Activated CD4-positive, alpha-beta T cell treated with anti-CD3 and anti-CD28 coated beads for 36 hours (primary cell): ENCODE measurements at regions of chr9 and their contacts with region 1.

Region 1: GRCh38 chr9:88106491-88106890 is 31.8 kb downstream of the SPATA31C2 start:
- DNase-seq: peak; percentile 38
- ATAC-seq: peak; percentile 47
- H3K4me3 Mint-ChIP-seq: no peak overlapping the region
- H3K27ac Mint-ChIP-seq: no peak overlapping the region
- H3K4me1 Mint-ChIP-seq: peaks cover 6% of the 10 kb centered on the region
- H3K27me3 Mint-ChIP-seq: peaks cover 29% of the 10 kb centered on the region

Region 2: GRCh38 chr9:87959916-87960581 is 146.4 kb before region 1 on chr9:
- CTCF ChIA-PET with region 1: no interaction called
- POLR2A ChIA-PET with region 1: no interaction called
- intact Hi-C with region 1: no loop called
- DNase-seq: no peak
- ATAC-seq: no peak
- H3K4me3 Mint-ChIP-seq: no peak overlapping the region
- H3K27ac Mint-ChIP-seq: no peak overlapping the region
- H3K4me1 Mint-ChIP-seq: peaks cover 10% of the 10 kb centered on the region
- H3K27me3 Mint-ChIP-seq: peaks cover 6% of the 10 kb centered on the region

Region 3: GRCh38 chr9:88072851-88073365 is 33.6 kb before region 1 on chr9:
- CTCF ChIA-PET with region 1: no interaction called
- POLR2A ChIA-PET with region 1: no interaction called
- intact Hi-C with region 1: no loop called
- DNase-seq: no peak
- ATAC-seq: no peak
- H3K4me3 Mint-ChIP-seq: no peak overlapping the region
- H3K27ac Mint-ChIP-seq: no peak overlapping the region
- H3K4me1 Mint-ChIP-seq: peaks cover 6% of the 10 kb centered on the region
- H3K27me3 Mint-ChIP-seq: peaks cover 57% of the 10 kb centered on the region

Region 4: DNA sequence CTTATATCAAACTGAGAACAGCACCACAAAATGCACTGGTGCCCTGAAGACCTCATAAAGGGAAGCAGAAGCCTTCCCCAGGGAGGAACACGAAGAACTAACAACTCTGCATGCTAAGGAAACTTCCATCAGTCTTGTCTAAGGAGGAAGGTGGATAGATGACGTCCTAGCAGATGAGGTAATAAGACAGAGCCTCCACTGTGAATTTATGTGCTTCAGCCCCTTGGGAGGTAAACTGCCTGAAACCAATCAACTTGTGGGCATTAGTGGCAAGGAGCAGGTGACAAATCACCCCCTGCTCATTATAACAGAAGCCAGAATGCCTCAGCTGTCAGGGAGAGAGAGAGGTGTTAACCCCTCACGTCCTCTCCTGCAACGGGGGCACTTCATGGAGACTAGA is 232.8 kb after region 1 on chr9:
- CTCF ChIA-PET with region 1: no interaction called
- POLR2A ChIA-PET with region 1: no interaction called
- intact Hi-C with region 1: no loop called
- DNase-seq: no peak
- ATAC-seq: no peak
- H3K4me3 Mint-ChIP-seq: no peak overlapping the region
- H3K27ac Mint-ChIP-seq: no peak overlapping the region
- H3K4me1 Mint-ChIP-seq: no peaks in the 10 kb centered on the region
- H3K27me3 Mint-ChIP-seq: no peaks in the 10 kb centered on the region

Region 5: DNA sequence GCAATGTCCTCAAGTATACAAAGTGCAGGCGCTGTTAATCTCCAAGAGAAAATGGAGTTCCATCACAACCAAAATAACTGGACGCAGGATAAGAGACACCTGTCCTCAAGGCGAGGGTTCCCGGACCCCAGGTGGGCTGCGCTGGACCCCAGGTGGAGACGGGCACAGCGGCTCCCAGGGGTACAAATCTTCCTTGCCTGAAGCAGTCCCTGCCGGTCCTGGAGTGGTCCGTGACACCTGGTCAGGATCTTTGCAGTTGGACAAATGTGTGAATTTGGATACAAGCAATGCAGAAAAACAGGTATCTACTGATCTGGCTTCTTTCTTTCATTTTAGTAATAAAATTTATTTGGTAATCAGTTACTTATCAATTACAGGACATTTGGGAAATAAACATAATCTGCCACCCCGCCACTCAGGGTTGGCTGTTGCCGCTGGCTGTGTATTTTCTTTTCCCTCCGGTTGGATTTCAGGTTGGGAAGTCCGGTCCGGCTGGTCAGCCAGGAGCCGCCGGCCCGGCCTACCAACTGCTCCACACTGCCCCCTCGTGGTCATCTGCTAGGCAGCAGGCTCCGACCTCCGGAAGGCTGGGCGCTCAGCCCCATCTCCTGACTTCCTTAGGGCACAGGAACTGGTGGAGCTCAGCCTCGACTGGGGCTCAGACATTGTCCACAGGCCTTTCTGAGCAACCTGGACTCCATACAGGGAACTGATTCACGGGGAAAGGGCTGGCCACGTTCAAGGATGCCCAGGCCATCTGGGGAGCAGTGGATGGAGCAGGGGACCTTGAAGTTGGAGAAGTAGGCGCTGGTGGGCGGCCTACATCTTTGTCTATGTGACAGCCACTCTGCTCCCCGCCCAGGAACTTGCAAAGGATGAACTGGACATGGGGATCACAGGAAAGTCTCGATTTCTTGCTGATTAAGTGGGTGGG is 471.9 kb after region 1 on chr9:
- CTCF ChIA-PET with region 1: no interaction called
- POLR2A ChIA-PET with region 1: no interaction called
- intact Hi-C with region 1: loop called (anchors 2 to 5 kb)
- DNase-seq: peak; percentile 84
- ATAC-seq: peak; percentile 73
- H3K4me3 Mint-ChIP-seq: peak overlapping the region; percentile 31
- H3K27ac Mint-ChIP-seq: no peak overlapping the region
- H3K4me1 Mint-ChIP-seq: no peaks in the 10 kb centered on the region
- H3K27me3 Mint-ChIP-seq: peaks cover 13% of the 10 kb centered on the region

Region 6: DNA sequence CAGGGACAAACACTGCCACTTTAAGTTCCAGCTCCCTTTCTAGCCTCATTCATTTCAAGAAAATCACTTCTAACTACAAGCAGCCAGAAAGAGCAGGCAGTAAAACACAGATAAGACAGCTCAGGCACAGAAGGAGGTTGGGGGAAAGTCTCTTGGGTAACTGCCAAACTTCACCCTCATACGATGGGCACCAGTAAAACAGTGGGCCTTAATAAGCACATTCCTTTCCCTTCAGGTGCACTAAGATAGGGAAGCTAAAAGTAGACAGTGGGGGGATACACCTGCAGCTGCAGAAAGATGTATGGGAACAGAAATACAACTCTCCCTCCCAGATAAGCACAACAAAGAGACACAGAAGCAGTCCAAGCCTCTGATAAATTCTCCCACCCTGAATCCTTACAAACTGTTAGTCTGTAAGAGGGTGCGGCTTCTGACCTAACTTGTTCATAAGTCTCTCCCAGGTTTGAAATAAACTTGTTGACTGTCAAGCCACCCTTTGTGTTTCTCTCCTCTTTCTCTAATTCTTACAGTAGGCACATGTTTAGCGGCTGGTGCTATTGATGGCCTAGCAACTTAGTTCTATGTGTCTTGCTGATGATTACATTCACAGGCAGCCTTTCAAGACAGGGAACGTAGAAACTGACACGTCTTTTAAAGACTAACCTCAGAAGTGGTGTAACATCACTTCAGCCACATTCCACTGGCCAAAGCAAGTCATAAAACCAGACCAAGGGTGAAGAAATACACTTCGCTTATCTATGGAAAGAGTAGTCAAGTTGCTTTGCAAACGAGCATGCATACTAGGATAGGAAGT is 1197.7 kb after region 1 on chr9:
- CTCF ChIA-PET with region 1: no interaction called
- POLR2A ChIA-PET with region 1: no interaction called
- intact Hi-C with region 1: no loop called
- DNase-seq: no peak
- ATAC-seq: no peak
- H3K4me3 Mint-ChIP-seq: no peak overlapping the region
- H3K27ac Mint-ChIP-seq: no peak overlapping the region
- H3K4me1 Mint-ChIP-seq: peaks cover 6% of the 10 kb centered on the region
- H3K27me3 Mint-ChIP-seq: no peaks in the 10 kb centered on the region